Adrenal gland (tissue), 19 donors: ENCODE measurements at regions of chrX and their contacts with region 1.

Region 1: DNA sequence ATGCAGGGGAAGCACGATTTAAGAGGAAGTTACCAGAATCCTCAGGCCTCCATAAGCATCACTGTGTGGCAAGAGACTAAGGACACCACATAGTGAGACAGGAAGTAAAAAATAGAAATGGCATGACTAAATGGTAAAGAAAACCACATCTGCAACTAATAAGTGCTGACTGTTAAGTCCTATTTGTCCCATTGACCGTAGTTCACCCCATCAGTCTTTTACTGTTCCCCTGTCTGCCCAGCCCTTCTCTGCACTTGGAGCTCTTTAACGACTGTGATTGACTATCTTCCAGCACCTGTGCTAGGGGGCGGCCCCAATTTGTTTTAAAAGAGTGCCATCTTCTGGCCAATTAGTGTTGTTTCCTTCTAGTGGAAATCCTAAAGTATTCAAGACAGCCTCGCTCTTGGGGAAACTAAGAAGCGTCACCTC is 94.2 kb downstream of the MAOA start:
- DNase-seq: peak; percentile 28 to 76 (median 50)
- H3K4me3 ChIP-seq: no peak overlapping the region
- H3K27ac ChIP-seq: no peak overlapping the region
- H3K4me1 ChIP-seq: no peaks in the 10 kb centered on the region
- H3K27me3 ChIP-seq: peaks cover 8% of the 10 kb centered on the region
- CTCF ChIP-seq: peak; percentile 22 to 68 (median 55)
- POLR2A ChIP-seq: no peak

Region 2: GRCh38 chrX:43573441-43574015 is 176.7 kb before region 1 on chrX:
- intact Hi-C with region 1: loop called in 1 of 2 experiments (anchors 10 kb)
- DNase-seq: no peak
- H3K4me3 ChIP-seq: no peak overlapping the region
- H3K27ac ChIP-seq: no peak overlapping the region
- H3K4me1 ChIP-seq: no peaks in the 10 kb centered on the region
- H3K27me3 ChIP-seq: peaks cover 16% of the 10 kb centered on the region
- CTCF ChIP-seq: no peak
- POLR2A ChIP-seq: no peak

Region 3: DNA sequence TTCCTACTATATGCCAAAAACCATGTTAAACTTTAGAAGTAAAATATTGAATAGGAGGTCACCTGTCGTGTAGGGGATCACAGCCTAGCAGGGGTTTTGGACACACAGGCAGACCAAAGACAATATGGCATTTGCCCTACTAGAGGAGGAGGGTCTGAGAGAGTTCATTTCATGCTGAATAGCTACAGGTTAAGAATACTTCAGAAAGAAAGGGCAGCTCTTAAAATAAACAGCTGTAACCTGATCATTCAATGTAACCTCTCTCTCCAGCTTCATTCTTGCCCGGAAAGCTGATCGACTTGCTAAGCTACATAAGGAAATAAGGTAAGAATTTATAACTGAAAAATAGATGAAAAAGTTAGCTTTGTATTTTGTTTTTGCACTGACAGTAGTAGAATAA is 14.3 kb before region 1 on chrX:
- intact Hi-C with region 1: no loop called
- DNase-seq: no peak
- H3K4me3 ChIP-seq: no peak overlapping the region
- H3K27ac ChIP-seq: no peak overlapping the region
- H3K4me1 ChIP-seq: no peaks in the 10 kb centered on the region
- H3K27me3 ChIP-seq: no peaks in the 10 kb centered on the region
- CTCF ChIP-seq: no peak
- POLR2A ChIP-seq: no peak

Region 4: DNA sequence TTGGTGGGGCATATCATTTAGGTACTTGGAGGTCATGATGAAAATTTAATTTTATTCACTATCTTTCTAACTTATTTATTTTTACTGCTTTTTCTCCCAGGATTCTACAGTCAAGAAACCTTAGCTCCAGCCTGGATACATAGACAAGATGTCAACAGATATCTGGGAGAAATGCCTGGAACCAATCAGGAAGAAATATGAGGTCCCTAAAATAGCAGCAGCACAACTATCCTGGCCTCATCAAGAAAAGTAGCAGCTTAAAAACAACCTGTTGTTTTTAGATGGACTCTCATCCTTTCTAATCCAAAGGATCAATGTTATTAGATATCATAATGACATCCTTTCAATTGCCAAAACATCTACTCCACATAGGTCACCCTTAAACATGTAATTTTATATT is 77.5 kb after region 1 on chrX:
- intact Hi-C with region 1: no loop called
- DNase-seq: no peak
- H3K4me3 ChIP-seq: no peak overlapping the region
- H3K27ac ChIP-seq: peak overlapping the region in 1 of 5 donors; percentile 6
- H3K4me1 ChIP-seq: no peaks in the 10 kb centered on the region
- H3K27me3 ChIP-seq: no peaks in the 10 kb centered on the region
- CTCF ChIP-seq: no peak
- POLR2A ChIP-seq: no peak

Region 5: DNA sequence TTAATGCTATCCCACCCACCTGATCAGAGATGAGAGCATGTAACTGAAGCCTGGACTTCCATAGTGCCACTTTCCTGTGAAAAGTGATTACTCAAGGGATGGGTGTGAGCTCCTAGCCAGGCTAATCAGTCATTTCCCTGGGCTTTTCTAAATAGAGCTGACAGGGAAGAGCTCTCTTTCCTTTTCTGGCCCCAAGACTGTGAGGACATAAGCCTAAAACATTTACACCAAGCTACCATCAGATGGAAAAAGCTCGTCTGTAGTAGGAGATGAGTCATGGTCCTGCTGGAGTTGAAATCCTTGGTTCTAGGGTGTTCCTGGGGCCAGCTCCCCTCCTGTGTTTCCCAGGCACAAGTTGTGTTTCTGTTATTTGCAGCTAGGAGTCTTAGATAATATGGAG is 275.3 kb after region 1 on chrX:
- intact Hi-C with region 1: no loop called
- DNase-seq: no peak
- H3K4me3 ChIP-seq: no peak overlapping the region
- H3K27ac ChIP-seq: no peak overlapping the region
- H3K4me1 ChIP-seq: no peaks in the 10 kb centered on the region
- H3K27me3 ChIP-seq: peaks cover 8% of the 10 kb centered on the region
- CTCF ChIP-seq: no peak
- POLR2A ChIP-seq: no peak